Gastrocnemius medialis (tissue), 4 donors: ENCODE measurements at regions of chr1 and their contacts with region 1.

Region 1: DNA sequence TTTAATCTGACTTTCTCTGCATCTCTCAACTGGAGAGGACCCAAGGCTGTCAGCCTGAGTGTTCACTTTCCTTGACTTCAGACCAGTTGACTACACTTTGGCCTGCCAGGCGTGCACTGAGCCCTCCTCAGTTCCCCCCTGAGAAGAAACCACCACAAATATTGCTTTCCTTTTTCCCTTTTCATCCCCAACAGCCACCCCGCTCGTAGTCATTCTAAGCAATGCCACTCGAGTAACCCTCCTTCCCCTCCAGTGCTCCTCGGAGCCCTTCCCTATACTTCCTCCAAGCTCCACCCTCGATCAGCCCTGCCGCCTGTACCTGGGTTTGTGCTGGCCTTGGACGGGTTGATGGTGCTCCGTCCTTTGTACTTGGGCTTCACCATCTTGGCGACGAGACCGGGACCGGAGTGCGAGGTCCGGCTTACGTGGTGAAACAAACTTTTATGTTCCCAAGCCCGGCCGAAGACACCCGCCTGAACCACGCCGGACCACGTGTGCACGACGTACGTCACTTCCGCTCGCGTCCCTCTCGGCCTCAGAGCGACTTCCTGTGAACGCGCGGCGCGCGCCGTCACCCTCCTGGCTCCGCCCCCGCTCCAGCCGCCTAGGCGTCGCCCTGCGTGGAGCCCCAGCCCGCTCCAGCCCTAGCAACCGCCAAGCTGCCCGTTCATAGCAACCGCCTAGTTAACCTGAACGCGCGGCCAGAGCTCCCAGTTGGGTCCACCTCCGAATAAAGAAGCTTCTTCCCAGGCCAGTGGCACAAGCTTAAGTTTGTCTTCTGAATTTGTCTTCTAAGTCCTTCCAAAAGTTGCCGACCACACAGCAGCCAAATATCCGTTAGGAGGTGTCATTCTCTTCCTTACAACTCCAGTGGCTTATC is at the start of gene GNL2:
- DNase-seq: peak; percentile 94 to 95
- ATAC-seq: peak; percentile 99
- H3K4me3 ChIP-seq: peak within 1 kb of the TSS; percentile 70 to 93 (median 79)
- H3K27ac ChIP-seq: peak within 1 kb of the TSS; percentile 83 to 92 (median 89)
- H3K4me1 ChIP-seq: peaks cover 15 to 18% of the 10 kb centered on the region in 2 donors
- H3K27me3 ChIP-seq: no peaks in the 10 kb centered on the region
- CTCF ChIP-seq: no peak
- POLR2A ChIP-seq: peak; percentile 80 to 89
- total RNA-seq, gene GNL2: 37.2 to 49.1 (median 43.2) TPM

Region 2: DNA sequence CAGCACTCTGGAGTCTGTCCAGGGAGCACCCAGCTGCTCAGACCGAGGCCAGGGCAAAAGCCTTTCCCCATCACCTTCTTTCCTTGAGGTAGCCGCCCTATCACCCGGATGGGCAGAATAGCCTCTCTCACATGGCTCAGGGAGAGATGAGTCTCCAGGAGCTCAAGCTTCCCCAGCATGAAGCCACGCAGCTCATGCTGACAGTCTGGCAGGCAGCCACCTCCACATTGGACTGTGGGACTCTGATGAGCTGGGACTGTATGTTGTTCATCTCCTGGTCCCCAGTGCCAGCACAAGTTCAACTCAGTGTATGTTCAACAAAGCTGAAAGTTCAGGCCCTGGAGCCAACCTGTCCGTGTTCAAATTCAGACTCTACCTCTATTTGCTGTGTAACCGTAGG is 196.5 kb before region 1 on chr1:
- in situ Hi-C with region 1: no loop called
- intact Hi-C with region 1: no loop called
- DNase-seq: no peak
- ATAC-seq: no peak
- H3K4me3 ChIP-seq: no peak overlapping the region
- H3K27ac ChIP-seq: no peak overlapping the region
- H3K4me1 ChIP-seq: no peaks in the 10 kb centered on the region
- H3K27me3 ChIP-seq: peaks cover 3 to 19% (median 4%) of the 10 kb centered on the region in 3 donors
- CTCF ChIP-seq: no peak
- POLR2A ChIP-seq: no peak

Region 3: GRCh38 chr1:37474046-37474759 is 121.5 kb before region 1 on chr1 and contains the start of gene ZC3H12A:
- in situ Hi-C with region 1: loop called in 1 of 4 experiments (anchors 10 kb)
- intact Hi-C with region 1: no loop called
- DNase-seq: peak; percentile 79 to 92
- ATAC-seq: peak; percentile 59
- H3K4me3 ChIP-seq: peak within 1 kb of the TSS; percentile 79 to 94 (median 93)
- H3K27ac ChIP-seq: peak within 1 kb of the TSS; percentile 89 to 98 (median 97)
- H3K4me1 ChIP-seq: peaks cover 65 to 72% of the 10 kb centered on the region in 2 donors
- H3K27me3 ChIP-seq: no peaks in the 10 kb centered on the region
- CTCF ChIP-seq: no peak
- POLR2A ChIP-seq: peak; percentile 99
- total RNA-seq, gene ZC3H12A: 5.3 to 27.1 (median 8.6) TPM

Region 4: GRCh38 chr1:37682334-37682987 is 86.8 kb after region 1 on chr1:
- in situ Hi-C with region 1: loop called in 3 of 4 experiments (anchors 5 to 10 kb)
- intact Hi-C with region 1: no loop called
- DNase-seq: peak in 1 of 2 donors; percentile 46
- ATAC-seq: peak in 1 of 2 donors; percentile 72
- H3K4me3 ChIP-seq: no peak overlapping the region
- H3K27ac ChIP-seq: no peak overlapping the region
- H3K4me1 ChIP-seq: no peaks in the 10 kb centered on the region
- H3K27me3 ChIP-seq: no peaks in the 10 kb centered on the region
- CTCF ChIP-seq: peak; percentile 58 to 82 (median 72)
- POLR2A ChIP-seq: no peak

Region 5: DNA sequence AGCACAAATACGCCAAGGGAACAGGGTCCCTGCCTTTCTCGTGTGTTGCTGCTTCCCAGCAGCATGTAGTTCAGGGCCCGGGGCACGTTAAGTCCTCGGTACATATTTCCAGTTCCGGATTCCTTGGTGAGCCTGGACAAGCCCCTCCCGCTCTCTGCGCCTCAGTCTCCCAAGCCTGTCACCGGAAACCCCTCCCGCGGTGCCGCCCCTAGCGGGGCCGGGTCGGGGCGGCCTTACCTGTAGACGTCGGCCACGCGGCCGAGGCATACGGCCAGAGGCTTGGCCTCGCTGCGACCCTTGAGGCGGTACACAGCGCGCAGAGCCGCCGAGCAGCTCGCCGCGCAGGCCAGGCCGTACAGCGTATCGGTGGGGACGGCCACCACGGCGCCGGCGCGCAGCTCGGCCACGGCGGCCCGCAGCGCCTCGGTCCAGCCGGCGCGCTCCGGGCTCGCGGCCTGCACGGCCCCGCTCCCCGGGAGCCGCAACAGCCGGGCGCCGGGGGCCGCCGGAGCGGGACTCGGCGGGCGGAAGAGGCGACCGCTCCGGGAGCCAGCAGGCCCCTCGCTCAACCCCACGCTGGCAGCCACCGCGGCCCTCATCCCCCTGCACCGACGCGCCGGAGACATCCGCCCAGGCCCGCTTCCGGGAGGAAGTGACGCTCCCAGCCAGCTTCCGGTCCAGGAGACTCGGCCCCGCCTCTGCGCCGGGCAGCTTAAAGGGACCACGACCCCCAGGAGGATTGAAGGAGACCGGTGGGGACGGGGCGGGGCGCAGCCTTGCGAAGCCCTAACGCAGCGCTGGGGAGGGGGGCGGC is 212.1 kb after region 1 on chr1 and contains the starts of genes C1orf122 and YRDC:
- in situ Hi-C with region 1: no loop called
- intact Hi-C with region 1: loop called (anchors 1 kb)
- DNase-seq: peak; percentile 90 to 92
- ATAC-seq: peak; percentile 85 to 94
- H3K4me3 ChIP-seq: peak within 1 kb of the TSS; percentile 74 to 93 (median 87)
- H3K27ac ChIP-seq: peak within 1 kb of the TSS; percentile 89 to 98 (median 96)
- H3K4me1 ChIP-seq: peaks cover 29 to 34% of the 10 kb centered on the region in 2 donors
- H3K27me3 ChIP-seq: no peaks in the 10 kb centered on the region
- CTCF ChIP-seq: no peak
- POLR2A ChIP-seq: peak; percentile 89 to 93
- total RNA-seq, gene C1orf122: 41.2 to 96.0 (median 56.8) TPM
- total RNA-seq, gene YRDC: 11.2 to 13.6 (median 11.7) TPM